Vagina (tissue), 2 donors: ENCODE measurements at regions of chr14 and their contacts with region 1.

Region 1: DNA sequence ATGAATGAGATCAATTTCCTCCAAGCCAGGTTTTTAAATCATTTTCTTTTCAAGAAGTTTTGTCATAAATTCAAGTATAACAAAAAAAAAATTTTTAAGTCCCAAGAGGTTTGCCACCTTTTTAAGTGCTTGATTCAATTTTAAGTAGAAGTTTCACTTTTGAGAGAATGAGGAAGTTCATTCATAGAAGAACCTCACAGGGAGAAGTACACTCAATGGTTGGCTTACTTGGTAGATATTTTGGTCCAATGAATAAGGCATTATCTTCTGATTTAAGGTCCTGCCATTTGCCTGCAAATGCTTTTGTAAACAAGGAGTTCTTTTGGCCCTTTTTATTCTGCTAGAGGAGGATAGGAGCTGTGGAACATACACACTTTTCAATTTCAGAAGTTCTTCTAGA is 96.7 kb upstream of the NOVA1 start:
- DNase-seq: no peak
- H3K4me3 ChIP-seq: no peak overlapping the region
- H3K27ac ChIP-seq: no peak overlapping the region
- H3K4me1 ChIP-seq: no peaks in the 10 kb centered on the region
- H3K27me3 ChIP-seq: no peaks in the 10 kb centered on the region
- CTCF ChIP-seq: no peak
- POLR2A ChIP-seq: no peak

Region 2: DNA sequence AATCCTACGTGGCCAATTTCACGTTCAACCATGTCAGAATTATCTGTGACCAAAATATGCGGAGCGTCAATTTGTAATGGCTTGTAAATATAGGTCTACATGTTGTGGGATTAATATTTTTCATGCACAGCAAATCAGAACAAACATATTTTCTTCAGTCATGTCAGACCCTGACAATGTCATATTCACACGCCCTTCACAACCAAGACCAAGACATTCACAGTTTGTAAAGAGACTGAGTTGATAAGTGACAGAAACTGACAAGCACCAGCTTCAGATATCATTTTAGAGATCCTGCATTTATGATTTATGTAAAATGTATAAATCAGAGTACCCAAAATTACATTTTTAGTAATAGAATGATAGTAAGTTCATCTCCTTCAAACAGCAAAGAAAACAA is 39.4 kb before region 1 on chr14:
- intact Hi-C with region 1: no loop called
- DNase-seq: no peak
- H3K4me3 ChIP-seq: no peak overlapping the region
- H3K27ac ChIP-seq: no peak overlapping the region
- H3K4me1 ChIP-seq: no peaks in the 10 kb centered on the region
- H3K27me3 ChIP-seq: no peaks in the 10 kb centered on the region
- CTCF ChIP-seq: no peak
- POLR2A ChIP-seq: no peak

Region 3: GRCh38 chr14:26719514-26719913 is 25.0 kb after region 1 on chr14:
- intact Hi-C with region 1: loop called (anchors 2 kb)
- DNase-seq: no peak
- H3K4me3 ChIP-seq: no peak overlapping the region
- H3K27ac ChIP-seq: no peak overlapping the region
- H3K4me1 ChIP-seq: no peaks in the 10 kb centered on the region
- H3K27me3 ChIP-seq: no peaks in the 10 kb centered on the region
- CTCF ChIP-seq: no peak
- POLR2A ChIP-seq: no peak